G401 (cell line): ENCODE measurements at regions of chr15 and their contacts with region 1.

Region 1: DNA sequence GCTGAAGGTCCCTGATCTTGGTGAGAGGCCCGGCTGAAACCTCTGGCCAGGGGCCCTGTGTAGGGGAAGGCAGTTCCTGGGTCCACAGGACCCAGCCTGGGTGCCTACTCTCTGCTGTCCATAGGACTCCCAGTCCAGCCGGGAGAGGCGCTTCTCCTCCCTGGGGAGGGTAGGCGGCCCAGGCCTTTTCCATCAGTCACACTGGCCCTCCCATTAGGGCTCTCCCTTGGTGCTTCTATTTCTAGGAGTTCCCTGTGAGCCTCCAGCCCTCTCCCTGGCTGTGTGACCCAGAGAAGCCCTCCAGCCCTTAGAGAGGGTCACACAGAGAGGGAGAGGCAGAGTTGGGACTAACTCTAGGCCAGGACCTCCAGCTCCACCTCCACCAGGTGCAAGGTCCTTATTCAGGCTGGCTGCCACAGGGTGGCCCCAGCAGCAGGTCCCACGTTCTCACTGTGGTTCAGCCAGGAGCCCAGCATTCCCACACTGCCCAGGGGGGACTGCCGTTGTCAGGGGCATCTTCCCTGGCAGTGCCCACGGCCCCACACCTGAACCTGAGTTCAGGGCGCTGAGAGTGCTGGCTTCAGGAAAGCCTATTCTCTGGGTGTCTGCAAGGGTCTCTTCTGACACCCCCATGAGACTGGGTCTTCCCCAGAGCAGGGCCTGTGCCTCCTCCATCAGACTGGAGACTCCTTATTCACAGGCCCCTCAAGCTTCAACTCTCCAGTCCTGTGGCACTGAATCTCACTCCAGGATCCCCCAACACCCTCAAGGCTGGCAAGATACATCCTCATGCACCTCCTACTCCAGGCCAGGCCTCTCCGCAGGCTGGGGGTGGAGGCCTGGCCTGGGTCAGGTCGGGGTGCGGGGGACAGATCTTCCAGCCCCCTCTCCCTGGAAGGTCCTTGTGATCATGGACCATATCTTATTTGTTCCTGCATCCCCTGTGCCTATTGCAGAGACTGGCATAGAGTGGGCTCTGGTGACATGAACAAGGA is 147.0 kb downstream of the SMAD6 start:
- DNase-seq: no peak

Region 2: DNA sequence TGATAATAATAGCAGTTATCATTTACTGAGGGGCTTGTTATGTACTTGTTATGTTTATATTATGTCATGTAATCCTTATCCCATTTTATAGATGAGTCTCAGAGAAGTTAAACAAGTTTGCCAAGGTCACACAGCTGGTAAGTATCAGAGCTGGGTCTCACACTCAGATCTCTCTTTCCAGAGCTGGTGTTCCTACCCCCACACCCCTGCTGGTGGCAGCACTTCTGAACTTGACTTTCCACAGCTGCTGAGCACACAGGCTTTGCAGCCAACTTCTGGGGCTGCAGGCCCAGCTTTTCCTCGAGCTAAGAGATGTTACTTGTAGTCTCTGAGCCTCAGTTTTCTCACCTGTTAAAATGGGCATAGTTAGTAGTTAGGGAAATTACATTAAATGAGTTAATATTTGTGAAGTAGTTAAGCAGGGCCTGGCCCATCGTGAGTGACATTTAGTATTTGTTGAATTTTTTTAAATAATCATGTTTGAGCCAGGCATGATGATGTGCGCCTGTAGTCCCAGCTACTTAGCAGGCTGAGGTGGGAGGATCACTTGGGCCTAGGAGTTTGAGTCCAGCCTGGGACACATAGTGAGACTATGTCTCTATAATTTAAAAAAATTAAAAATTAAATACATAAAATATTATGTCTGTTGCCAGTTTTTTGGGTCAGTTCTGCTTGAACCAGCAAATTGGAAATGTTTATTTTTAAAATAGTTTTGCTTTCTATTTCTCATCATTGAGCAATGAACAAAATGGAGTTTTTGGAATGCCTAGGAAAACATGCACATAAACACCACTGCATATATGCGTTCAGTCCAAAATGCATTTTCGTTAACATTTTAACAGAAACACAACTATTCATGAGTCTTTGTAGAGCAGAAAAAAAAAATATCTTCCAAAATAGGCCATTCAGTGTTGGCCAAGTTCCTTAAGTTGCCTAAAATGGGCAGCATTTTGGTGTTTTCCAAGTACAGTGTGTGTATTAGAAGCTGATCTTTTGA is 59.7 kb before region 1 on chr15:
- in situ Hi-C with region 1: loop called (anchors 5 kb)
- DNase-seq: no peak